ENCODE measurements at regions of chr17 and their contacts with region 1.

Region 1: DNA sequence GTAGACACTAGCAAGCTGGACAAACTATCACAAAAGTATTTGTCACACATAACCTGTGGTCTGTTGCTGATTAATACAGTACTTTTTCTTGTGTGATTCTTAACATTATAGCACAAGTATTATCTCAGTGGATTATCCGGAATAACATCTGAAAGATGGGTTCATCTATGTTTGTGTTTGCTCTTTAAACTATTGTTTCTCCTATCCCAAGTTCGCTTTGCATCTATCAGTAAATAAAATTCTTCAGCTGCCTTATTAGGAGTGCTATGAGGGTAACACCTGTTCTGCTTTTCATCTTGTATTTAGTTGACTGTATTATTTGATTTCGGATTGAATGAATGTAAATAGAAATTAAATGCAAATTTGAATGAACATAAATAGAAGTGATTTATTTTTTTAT is 14.5 kb downstream of the RNFT1 start:
- H3K4me3 Mint-ChIP-seq: no peak overlapping the region
- H3K27ac Mint-ChIP-seq: no peak overlapping the region
- H3K4me1 Mint-ChIP-seq: no peaks in the 10 kb centered on the region
- H3K27me3 Mint-ChIP-seq: no peaks in the 10 kb centered on the region

Region 2: GRCh38 chr17:60065136-60065535 is 115.1 kb after region 1 on chr17:
- intact Hi-C with region 1: loop called (anchors 10 kb)
- H3K4me3 Mint-ChIP-seq: no peak overlapping the region
- H3K27ac Mint-ChIP-seq: no peak overlapping the region
- H3K4me1 Mint-ChIP-seq: no peaks in the 10 kb centered on the region
- H3K27me3 Mint-ChIP-seq: no peaks in the 10 kb centered on the region

Measured in dendritic cell treated with granulocyte-macrophage colony-stimulating factor and Interleukin-4, amounts not matched to agents 40 ng/mL and 50 ng/mL, for 4 days (primary cell).